ENCODE measurements at regions of chr5 and their contacts with region 1.

Region 1: DNA sequence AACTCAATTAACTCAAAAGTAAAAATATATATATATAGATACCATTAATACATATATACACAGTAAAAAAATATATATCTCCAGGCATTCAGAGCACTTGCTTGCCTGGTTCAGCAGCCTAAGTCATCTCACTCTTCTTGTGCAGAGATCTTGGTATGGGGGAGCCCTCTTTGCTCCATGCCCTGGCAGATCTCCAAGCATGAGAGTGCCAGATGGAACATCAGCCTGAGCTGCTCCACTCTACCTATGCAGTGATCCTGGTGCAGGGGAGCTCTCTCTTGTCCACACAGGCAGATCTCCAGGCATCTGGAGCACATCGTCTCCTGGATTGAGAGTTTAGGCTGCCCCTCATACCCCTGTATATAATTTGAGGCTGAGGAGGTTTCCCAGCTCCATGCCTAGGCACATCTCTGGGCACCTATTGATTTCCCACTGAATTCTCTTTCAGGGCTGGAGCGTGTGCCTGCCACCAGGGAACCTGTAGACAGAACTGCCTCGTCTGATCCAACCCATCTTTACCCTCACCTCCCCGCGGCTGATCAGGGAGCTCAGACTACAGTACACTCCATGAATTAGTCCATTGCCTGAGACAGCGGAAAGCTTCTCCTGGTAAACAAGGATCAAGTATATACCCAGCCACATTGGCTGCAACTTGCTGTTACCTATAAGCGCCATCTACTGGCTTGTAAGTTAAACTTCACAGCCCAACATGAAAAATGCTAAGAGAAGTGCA is 342.4 kb upstream of the GRIA1 start:
- DNase-seq: peak; percentile 39
- H3K4me3 ChIP-seq: no peak overlapping the region
- H3K27ac ChIP-seq: no peak overlapping the region
- H3K4me1 ChIP-seq: no peaks in the 10 kb centered on the region
- CTCF ChIP-seq: peak; percentile 85

Region 2: DNA sequence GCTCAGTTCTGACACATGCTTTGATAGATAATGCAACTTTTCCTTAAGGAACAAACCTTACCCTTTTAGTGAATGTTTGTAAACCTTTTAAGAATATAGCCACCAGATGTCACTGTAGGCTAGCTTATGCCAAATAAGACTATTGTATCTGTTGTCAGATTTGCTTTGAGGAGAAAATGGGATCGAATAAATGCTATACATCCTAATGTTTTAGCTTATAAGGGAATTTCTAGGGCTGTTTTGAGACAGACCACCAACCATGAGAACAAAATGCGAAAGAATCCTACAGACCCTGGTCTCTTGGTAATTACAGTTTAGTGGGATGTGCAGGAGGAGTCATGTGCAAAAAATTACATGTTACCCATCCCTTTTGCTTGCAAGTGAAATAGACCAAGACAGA is 615.3 kb before region 1 on chr5:
- CTCF ChIA-PET with region 1: no interaction called
- POLR2A ChIA-PET with region 1: no interaction called
- intact Hi-C with region 1: loop called (anchors 5 kb)
- DNase-seq: peak; percentile 54
- H3K4me3 ChIP-seq: no peak overlapping the region
- H3K27ac ChIP-seq: no peak overlapping the region
- H3K4me1 ChIP-seq: no peaks in the 10 kb centered on the region
- CTCF ChIP-seq: peak; percentile 77